ENCODE measurements at regions of chr1 and their contacts with region 1.

Region 1: GRCh38 chr1:98468111-98468717 is 193.3 kb upstream of the SNX7 start:
- DNase-seq: peak; percentile 10
- ATAC-seq: no peak
- H3K4me3 ChIP-seq: no peak overlapping the region
- H3K27ac ChIP-seq: no peak overlapping the region
- H3K4me1 ChIP-seq: no peaks in the 10 kb centered on the region
- H3K27me3 ChIP-seq: no peaks in the 10 kb centered on the region
- CTCF ChIP-seq: peak; percentile 52
- EP300 ChIP-seq: no peak
- POLR2A ChIP-seq: no peak
- RAD21 ChIP-seq: no peak

Region 2: DNA sequence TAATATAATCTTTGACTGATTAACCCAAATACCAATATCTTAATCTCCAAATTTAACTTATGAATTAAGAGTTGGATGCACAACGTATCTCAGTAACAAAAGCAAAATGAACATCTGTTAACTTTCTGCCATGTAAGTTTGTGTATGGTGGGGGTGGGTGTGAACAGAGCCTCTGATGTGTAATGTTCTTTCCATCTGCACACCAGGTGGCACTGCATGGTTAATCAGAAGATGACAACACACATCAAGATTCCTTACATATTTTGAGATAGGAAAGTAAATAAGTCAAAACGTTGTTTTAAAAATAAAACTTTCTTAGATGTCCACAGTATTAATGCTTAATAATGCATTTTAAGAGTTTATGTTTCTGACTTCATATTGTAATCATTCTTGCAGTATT is 799.3 kb before region 1 on chr1:
- CTCF ChIA-PET with region 1: no interaction called
- POLR2A ChIA-PET with region 1: no interaction called
- in situ Hi-C with region 1: no loop called
- intact Hi-C with region 1: loop called (anchors 5 kb)
- DNase-seq: no peak
- ATAC-seq: no peak
- H3K4me3 ChIP-seq: no peak overlapping the region
- H3K27ac ChIP-seq: no peak overlapping the region
- H3K4me1 ChIP-seq: no peaks in the 10 kb centered on the region
- H3K27me3 ChIP-seq: no peaks in the 10 kb centered on the region
- CTCF ChIP-seq: no peak
- EP300 ChIP-seq: no peak
- POLR2A ChIP-seq: no peak
- RAD21 ChIP-seq: no peak

Region 3: GRCh38 chr1:98516306-98516705 is 48.1 kb after region 1 on chr1:
- CTCF ChIA-PET with region 1: no interaction called
- POLR2A ChIA-PET with region 1: no interaction called
- in situ Hi-C with region 1: no loop called
- intact Hi-C with region 1: no loop called
- DNase-seq: no peak
- ATAC-seq: no peak
- H3K4me3 ChIP-seq: no peak overlapping the region
- H3K27ac ChIP-seq: no peak overlapping the region
- H3K4me1 ChIP-seq: no peaks in the 10 kb centered on the region
- H3K27me3 ChIP-seq: no peaks in the 10 kb centered on the region
- CTCF ChIP-seq: no peak
- EP300 ChIP-seq: no peak
- POLR2A ChIP-seq: no peak
- RAD21 ChIP-seq: no peak